ENCODE measurements at regions of chr11 and their contacts with region 1.

Region 1: DNA sequence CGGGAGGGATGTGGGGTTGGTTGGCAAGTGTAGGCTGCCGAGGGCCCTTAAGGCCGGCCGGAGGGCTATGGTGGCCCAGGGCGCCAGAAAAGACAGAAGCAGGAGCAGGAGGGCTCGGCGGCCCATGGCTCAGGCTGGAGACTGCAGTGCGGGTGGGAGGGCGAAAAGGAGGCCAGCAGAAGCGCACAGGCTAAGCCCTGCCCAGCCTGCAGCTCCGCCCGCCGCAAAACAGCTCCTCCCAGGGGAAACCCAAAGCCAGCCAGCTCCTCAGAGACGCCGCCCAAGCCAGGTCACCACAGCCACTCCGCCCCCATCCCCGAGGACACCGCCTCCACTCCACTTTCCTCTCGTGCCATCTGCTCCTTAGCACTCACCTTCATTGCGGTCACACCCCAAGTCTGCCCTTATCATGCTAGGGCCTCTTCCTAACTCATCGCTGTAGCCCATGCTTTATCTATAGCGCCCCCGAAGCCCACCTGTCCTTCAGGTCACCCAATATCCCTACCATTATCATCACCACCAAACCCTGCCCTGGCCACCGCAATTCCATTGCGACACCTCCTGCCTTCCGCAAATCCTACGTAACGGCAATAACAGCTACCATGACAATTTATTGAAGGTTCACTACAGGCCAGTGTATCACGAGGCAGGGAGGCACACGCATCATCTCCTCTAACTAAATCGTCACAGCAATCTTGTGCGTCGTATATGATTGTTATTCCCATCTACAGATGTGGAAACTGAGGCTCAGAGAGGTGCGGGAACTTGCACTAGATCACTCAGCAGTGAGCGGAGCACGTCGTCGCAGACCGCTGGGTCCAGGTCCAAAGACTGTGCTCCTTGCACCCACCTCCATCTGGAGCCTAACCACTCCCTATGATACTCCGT is at the start of gene PRCP:
- DNase-seq: peak; percentile 97
- ATAC-seq: peak; percentile 96
- total RNA-seq, gene PRCP: 43.4 TPM

Region 2: DNA sequence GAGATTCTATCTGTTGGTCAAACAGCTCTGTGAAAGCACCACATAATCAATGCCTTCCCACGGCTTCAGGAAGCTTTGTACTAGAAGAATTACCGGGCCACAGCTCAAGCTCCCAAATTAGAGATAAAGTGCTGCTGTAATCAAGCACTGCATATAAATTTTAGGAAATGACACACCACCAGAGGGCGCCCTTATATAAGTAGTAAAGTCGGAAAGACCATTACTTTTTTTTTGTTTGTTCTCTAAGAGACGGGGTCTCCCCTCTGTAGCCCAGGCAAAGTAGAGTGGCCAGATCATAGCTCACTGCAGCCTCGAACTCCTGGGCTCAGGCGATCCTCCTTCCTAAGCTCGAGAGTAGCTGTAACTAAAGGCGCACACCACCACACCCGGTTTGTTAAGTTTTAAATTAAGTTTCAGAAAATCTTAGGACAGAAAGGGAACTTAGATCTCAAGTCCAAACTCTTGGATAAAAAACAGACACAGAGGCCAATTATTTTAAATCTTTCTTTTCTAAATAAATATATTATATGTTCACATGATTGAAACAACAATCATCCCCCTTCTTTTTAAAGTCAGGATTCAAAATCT is 32.9 kb before region 1 on chr11:
- intact Hi-C with region 1: loop called (anchors 2 kb)
- DNase-seq: no peak
- ATAC-seq: peak; percentile 19

Region 3: DNA sequence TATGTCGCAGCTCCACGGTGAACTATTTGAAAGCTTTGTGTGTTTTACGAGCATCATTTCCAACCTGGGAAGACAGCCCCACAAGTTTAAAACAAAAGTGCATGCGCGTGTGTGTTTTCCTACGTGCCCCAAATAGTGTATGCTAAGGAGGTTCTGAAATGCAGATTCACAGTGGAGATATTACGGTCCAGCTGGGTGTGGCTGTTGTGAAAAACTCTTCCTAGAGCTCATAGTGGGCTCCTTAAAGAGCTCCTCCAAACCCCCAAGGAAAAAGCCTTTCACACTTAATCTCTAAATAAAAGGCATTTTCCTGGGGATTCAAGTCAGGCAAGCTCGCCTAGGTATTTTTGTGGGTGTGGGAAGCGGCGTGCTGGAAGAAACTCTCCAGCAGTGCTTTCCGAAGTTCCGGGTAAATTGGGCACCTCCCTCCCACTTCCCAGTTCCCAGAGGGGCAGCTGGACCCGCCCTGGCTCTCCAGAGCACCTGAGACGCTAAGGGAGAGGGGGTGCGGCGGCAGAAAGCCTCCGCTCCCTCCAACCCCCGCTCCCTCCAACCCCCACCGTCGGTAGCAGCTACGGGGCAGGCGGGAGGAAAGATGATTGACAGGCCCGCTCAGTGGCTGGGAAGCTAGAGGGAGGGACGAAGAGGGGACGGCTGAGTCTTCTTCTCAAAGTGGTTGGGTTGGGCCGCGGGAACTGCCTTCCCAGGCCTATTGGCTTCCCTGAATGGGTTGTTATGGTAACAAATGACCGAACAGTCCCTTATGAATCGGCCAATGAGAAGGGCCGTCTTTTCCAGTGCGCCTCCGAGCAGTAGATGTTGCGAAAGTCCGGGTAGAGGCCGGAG is 255.9 kb after region 1 on chr11:
- intact Hi-C with region 1: loop called (anchors 2 kb)
- DNase-seq: peak; percentile 99
- ATAC-seq: peak; percentile 97

Region 4: DNA sequence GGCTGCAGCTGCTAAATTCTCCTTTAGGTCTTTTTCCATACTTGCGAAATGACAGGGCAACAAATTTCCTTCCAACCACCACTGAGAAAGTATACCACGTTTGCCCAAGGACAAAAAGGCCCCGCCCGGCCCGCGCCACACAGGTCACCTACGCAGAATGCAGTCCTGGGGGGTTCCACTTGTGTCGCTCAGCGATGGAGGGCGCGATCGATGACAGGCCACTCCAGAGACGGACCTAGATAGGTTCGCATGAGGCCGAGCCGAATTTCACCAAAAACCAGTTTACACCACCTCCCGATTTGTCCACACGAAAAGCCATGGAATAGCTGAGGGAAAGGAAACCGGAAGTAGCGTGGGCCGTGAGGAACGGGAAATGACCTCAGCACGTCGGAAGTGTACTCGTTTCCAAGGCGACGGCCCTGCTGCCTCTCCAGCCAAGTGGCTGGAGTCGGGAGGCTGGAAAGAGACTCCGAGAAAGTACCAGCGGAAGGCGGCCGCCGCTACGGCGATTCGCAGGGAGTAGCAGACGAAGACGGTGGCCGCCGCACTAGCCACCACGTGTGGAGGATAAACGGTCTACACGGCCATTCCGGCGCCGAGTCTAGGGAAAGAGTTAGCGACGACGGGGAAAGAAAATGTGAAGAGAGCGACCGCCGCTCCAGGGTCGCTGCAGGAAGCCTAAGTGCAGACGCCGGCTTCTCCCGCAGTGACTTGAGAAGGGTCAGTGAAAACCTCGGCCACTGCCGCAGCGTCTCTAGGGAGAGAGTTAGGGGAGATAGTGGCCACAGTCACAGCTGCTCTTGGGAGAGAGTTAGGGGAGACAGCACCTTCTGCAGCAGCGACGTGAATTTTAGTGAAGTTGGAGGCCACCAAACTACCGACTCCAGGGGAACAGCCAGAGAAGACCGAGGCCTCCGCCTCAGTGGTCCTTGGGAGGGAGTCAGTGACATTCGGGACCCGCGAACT is 293.1 kb after region 1 on chr11 and contains the start of gene ANKRD42:
- intact Hi-C with region 1: loop called (anchors 1 kb)
- DNase-seq: peak; percentile 95
- ATAC-seq: peak; percentile 96
- total RNA-seq, gene ANKRD42: 4.7 TPM

Region 5: GRCh38 chr11:83285771-83286528 is 385.4 kb after region 1 on chr11 and contains the start of gene CCDC90B:
- intact Hi-C with region 1: loop called (anchors 1 kb)
- DNase-seq: peak; percentile 96
- ATAC-seq: peak; percentile 98
- total RNA-seq, gene CCDC90B: 21.2 TPM

Measured in Right ventricle myocardium inferior (tissue), 1 donor.